GM12878 (cell line): ENCODE measurements at regions of chr2 and their contacts with region 1.

Region 1: GRCh38 chr2:108460345-108461037 is 11.5 kb downstream of the GCC2 start:
- DNase-seq: peak; percentile 60
- ATAC-seq: peak; percentile 90
- H3K4me3 ChIP-seq: no peak overlapping the region
- H3K27ac ChIP-seq: peak overlapping the region; percentile 91
- H3K4me1 ChIP-seq: peaks cover 14% of the 10 kb centered on the region
- H3K27me3 ChIP-seq: no peaks in the 10 kb centered on the region
- CTCF ChIP-seq: no peak
- EP300 ChIP-seq: no peak; a peak in 1 of 4 replicates
- POLR2A ChIP-seq: no peak
- RAD21 ChIP-seq: no peak

Region 2: GRCh38 chr2:108215794-108216211 is 244.7 kb before region 1 on chr2:
- CTCF ChIA-PET with region 1: no interaction called
- POLR2A ChIA-PET with region 1: no interaction called
- RAD21 ChIA-PET with region 1: no interaction called
- SMC1A ChIA-PET with region 1: no interaction called
- in situ Hi-C with region 1: no loop called
- intact Hi-C with region 1: no loop called
- DNase-seq: no peak
- ATAC-seq: peak; percentile 44; the same call in 2 of the 3 replicates
- H3K4me3 ChIP-seq: no peak overlapping the region
- H3K27ac ChIP-seq: no peak overlapping the region
- H3K4me1 ChIP-seq: no peaks in the 10 kb centered on the region
- H3K27me3 ChIP-seq: no peaks in the 10 kb centered on the region
- CTCF ChIP-seq: peak in 2 of 3 experiments; percentile 37 to 47; a peak in 3 of 6 replicates
- EP300 ChIP-seq: no peak
- POLR2A ChIP-seq: no peak
- RAD21 ChIP-seq: peak; percentile 61

Region 3: DNA sequence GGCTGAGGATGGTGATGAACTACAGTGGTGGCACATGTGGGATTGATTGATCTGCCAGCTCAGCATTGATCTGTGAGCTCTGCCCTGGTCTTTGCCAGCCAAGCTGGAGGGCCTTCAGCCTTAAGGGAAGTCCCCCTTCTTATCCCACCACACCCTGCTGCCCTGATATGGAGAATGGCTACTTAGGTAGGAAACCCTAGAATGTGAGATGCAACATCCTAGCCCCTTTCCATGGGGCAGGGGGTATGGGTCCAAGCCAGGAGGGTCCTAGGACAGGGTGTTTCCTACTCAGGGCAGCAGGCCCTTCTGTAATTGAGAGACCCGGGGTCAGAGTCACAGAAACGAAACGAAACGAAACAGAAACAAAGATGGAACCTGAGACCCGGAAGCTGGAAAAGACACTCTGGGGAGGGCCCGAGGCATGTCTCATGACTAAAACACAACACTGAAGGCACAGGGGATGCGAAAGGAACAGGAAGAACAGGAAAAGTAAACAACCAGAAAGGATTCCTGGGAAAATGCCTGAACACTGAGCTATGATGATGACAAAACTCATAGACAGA is 188.7 kb before region 1 on chr2:
- CTCF ChIA-PET with region 1: no interaction called
- POLR2A ChIA-PET with region 1: no interaction called
- RAD21 ChIA-PET with region 1: no interaction called
- SMC1A ChIA-PET with region 1: no interaction called
- in situ Hi-C with region 1: no loop called
- intact Hi-C with region 1: no loop called
- DNase-seq: no peak
- ATAC-seq: no peak
- H3K4me3 ChIP-seq: no peak overlapping the region
- H3K27ac ChIP-seq: no peak overlapping the region
- H3K4me1 ChIP-seq: no peaks in the 10 kb centered on the region
- H3K27me3 ChIP-seq: no peaks in the 10 kb centered on the region
- CTCF ChIP-seq: no peak
- EP300 ChIP-seq: no peak
- POLR2A ChIP-seq: no peak
- RAD21 ChIP-seq: no peak

Region 4: GRCh38 chr2:108533832-108534583 is 73.5 kb after region 1 on chr2 and contains the start of gene LIMS1:
- CTCF ChIA-PET with region 1: interaction called, 3 read pairs
- POLR2A ChIA-PET with region 1: interaction called, 6 read pairs
- RAD21 ChIA-PET with region 1: no interaction called
- SMC1A ChIA-PET with region 1: interaction called, 3 read pairs
- in situ Hi-C with region 1: no loop called
- intact Hi-C with region 1: loop called (anchors 5 kb)
- DNase-seq: peak; percentile 50
- ATAC-seq: peak; percentile 94
- H3K4me3 ChIP-seq: peak within 1 kb of the TSS; percentile 85
- H3K27ac ChIP-seq: peak within 1 kb of the TSS; percentile 66
- H3K4me1 ChIP-seq: no peaks in the 10 kb centered on the region; the same call in 1 of the 2 replicates
- H3K27me3 ChIP-seq: no peaks in the 10 kb centered on the region
- CTCF ChIP-seq: 0 out of 6 replicates have a peak, but pooled peaks of 1 of the 3 experiments have one; percentile 7
- EP300 ChIP-seq: no peak
- POLR2A ChIP-seq: peak; percentile 93
- RAD21 ChIP-seq: 0 out of 2 replicates have a peak, but pooled peaks have one; percentile 9
- polyA plus RNA-seq, gene LIMS1: 15.7 to 17.6 TPM

Region 5: DNA sequence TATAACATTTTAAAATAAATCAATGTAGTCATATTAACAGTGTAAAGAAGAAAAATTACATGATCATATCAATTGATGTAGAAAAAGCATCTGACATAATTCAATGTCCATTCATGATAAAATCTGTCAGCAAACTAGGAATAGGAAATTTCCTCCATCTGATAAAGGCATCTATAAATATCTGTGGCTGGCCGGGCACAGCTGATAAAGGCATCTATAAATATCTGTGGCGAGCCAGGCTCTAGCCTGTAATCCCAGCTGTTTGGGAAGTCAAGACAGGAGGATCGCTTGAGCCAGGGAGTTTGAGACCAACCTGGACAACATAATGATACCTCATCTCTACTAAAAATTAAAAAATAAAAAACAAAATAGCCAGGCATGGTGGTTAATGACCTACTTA is 240.7 kb after region 1 on chr2:
- CTCF ChIA-PET with region 1: no interaction called
- POLR2A ChIA-PET with region 1: no interaction called
- RAD21 ChIA-PET with region 1: no interaction called
- SMC1A ChIA-PET with region 1: no interaction called
- in situ Hi-C with region 1: no loop called
- intact Hi-C with region 1: no loop called
- DNase-seq: no peak
- ATAC-seq: no peak
- H3K4me3 ChIP-seq: no peak overlapping the region
- H3K27ac ChIP-seq: no peak overlapping the region
- H3K4me1 ChIP-seq: no peaks in the 10 kb centered on the region
- H3K27me3 ChIP-seq: no peaks in the 10 kb centered on the region
- CTCF ChIP-seq: no peak
- EP300 ChIP-seq: no peak
- POLR2A ChIP-seq: no peak
- RAD21 ChIP-seq: no peak